Heart left ventricle (tissue), 16 donors: ENCODE measurements at regions of chr7 and their contacts with region 1.

Region 1: DNA sequence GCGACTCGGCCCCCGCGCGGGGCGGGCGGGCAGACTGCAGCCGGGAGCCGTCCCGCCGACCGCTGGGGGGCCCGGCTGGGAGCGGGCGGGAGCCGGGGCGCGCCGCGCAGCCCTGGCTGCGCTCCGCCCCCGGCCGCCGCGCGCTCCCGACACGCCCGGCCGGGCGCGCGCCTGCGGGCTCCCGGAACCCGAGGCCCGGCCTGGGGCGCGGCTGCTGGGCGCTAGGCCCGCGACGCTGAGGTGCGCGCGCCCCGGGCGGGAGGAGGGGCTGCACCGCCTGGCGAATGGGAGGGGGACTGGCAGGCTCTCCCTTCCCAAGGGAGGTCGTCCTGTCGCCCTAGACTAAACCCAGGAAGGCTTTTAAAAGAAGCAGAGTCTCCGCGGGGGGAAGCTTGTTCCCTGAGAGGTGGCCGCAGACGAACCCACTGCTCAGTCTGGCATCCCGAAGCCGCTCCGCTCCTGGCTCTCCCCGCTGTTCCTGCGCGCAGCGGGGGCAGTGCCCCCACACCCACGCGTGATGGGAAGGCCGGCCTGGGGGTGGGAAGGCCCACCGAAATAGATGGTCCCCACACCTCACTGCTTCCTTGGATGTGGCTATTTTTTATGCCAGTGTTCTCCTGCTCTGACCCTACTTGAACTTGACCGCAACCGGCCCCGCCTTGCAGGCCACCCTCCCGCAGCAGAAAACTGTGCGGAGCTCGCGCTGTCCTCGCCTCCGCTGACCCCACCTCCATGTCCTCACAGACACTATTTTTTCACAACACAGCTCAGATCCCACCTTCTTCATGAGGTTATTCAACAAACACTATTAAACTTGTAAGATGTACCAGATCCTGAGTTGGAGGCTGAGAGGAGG is at the start of gene VOPP1:
- DNase-seq: peak; percentile 69 to 87 (median 77)
- ATAC-seq: peak; percentile 74 to 90 (median 87)
- H3K4me3 ChIP-seq: peak within 1 kb of the TSS; percentile 80 to 99 (median 97)
- H3K27ac ChIP-seq: peak within 1 kb of the TSS; percentile 64 to 96 (median 90)
- H3K4me1 ChIP-seq: peaks cover 6 to 61% (median 47%) of the 10 kb centered on the region in 12 donors
- H3K27me3 ChIP-seq: no peaks in the 10 kb centered on the region
- CTCF ChIP-seq: no peak
- POLR2A ChIP-seq: peak in 1 of 2 donors; percentile 13
- total RNA-seq, gene VOPP1: 20.3 to 58.0 (median 26.8) TPM

Region 2: GRCh38 chr7:55365675-55366460 is 206.7 kb before region 1 on chr7:
- intact Hi-C with region 1: loop called in 1 of 10 experiments (anchors 5 kb)
- DNase-seq: peak; percentile 96 to 98 (median 97)
- ATAC-seq: peak; percentile 97 to 99 (median 99)
- H3K4me3 ChIP-seq: peak overlapping the region; percentile 73 to 100 (median 96)
- H3K27ac ChIP-seq: peak overlapping the region; percentile 95 to 100 (median 100)
- H3K4me1 ChIP-seq: peaks cover 0 to 21% (median 15%) of the 10 kb centered on the region in 12 donors
- H3K27me3 ChIP-seq: no peaks in the 10 kb centered on the region
- CTCF ChIP-seq: peak in 10 of 12 donors; percentile 5 to 52 (median 26)
- POLR2A ChIP-seq: peak in 1 of 2 donors; percentile 65

Region 3: DNA sequence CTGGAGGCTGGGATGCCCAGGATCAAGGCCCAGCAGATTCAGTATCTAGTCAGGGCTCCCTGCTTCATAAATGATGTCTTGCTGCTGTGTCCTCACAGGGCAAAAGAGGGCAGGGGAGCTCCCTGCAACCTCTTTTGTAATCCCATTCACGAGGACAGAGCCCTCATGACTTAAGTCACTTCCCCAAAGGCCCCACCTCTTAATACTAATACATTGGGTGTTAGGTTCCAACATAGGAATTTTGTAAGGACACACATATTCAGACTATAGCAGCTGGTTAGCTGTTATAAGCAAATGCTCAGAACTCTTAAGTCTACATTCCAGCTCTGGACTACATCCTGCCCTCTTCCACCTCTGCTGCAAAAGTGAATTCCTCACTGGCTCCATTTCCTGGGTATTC is 63.3 kb before region 1 on chr7:
- intact Hi-C with region 1: loop called in 1 of 10 experiments (anchors 10 kb)
- DNase-seq: no peak
- ATAC-seq: peak in 1 of 4 donors; percentile 47
- H3K4me3 ChIP-seq: no peak overlapping the region
- H3K27ac ChIP-seq: no peak overlapping the region
- H3K4me1 ChIP-seq: peaks cover 0 to 25% (median 3%) of the 10 kb centered on the region in 12 donors
- H3K27me3 ChIP-seq: no peaks in the 10 kb centered on the region
- CTCF ChIP-seq: no peak
- POLR2A ChIP-seq: no peak

Region 4: DNA sequence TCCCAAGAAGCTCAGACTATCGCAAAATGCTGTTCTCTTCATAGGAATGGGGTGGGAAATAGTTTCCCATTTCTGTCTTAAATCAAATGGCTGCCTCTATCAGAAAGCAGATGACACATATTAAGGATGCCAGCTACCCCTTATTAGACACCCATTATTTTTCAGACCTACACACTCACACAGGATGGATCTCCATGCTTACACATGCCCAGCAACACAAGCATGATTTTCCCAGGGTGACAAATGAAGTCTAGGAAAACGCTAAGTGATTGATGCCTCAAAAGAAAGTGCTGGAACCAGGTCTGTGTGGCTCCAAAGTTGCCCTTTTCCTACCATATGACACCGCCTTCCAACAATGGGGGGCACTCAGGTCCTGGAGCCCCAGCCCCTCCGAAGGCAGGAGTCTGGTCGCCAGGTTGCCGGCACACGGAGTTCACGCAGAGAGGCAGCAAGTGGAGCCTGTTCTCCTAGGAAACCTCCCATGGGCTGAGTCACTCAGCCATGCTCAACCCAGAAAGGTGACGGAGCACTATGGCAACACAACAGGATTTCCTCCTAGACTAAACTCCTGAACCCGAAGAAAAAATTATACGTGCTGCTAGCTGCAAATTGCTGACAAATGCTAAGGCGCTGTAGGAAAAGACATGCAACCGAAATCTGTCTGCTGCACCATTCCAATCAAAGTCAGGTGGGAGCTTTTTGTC is 20.1 kb before region 1 on chr7:
- intact Hi-C with region 1: loop called in 2 of 10 experiments (anchors 2 kb)
- DNase-seq: peak in 3 of 5 donors; percentile 39 to 59 (median 46)
- ATAC-seq: peak in 3 of 4 donors; percentile 87 to 91 (median 90)
- H3K4me3 ChIP-seq: peak overlapping the region in 1 of 12 donors; percentile 9
- H3K27ac ChIP-seq: peak overlapping the region in 10 of 12 donors; percentile 7 to 62 (median 48)
- H3K4me1 ChIP-seq: peaks cover 0 to 80% (median 32%) of the 10 kb centered on the region in 12 donors
- H3K27me3 ChIP-seq: no peaks in the 10 kb centered on the region
- CTCF ChIP-seq: no peak
- POLR2A ChIP-seq: no peak